Activated CD8-positive, alpha-beta T cell treated with anti-CD3 and anti-CD28 coated beads, Interleukin-2, amount 10 ng/mL, durations not matched to agents 7 days and 5 days (primary cell): ENCODE measurements at regions of chr9 and their contacts with region 1.

Region 1: GRCh38 chr9:6598249-6598725 is 47.2 kb downstream of the GLDC start:
- DNase-seq: no peak
- ATAC-seq: no peak
- H3K4me3 Mint-ChIP-seq: no peak overlapping the region
- H3K27ac Mint-ChIP-seq: no peak overlapping the region
- H3K4me1 Mint-ChIP-seq: no peaks in the 10 kb centered on the region
- H3K27me3 Mint-ChIP-seq: no peaks in the 10 kb centered on the region

Region 2: GRCh38 chr9:6184749-6185645 is 413.3 kb before region 1 on chr9:
- CTCF ChIA-PET with region 1: no interaction called
- POLR2A ChIA-PET with region 1: no interaction called
- DNase-seq: no peak
- ATAC-seq: no peak
- H3K4me3 Mint-ChIP-seq: no peak overlapping the region
- H3K27ac Mint-ChIP-seq: no peak overlapping the region
- H3K4me1 Mint-ChIP-seq: no peaks in the 10 kb centered on the region
- H3K27me3 Mint-ChIP-seq: no peaks in the 10 kb centered on the region

Region 3: GRCh38 chr9:6584881-6585597 is 13.2 kb before region 1 on chr9:
- CTCF ChIA-PET with region 1: interaction called, 10 read pairs
- POLR2A ChIA-PET with region 1: no interaction called
- DNase-seq: no peak
- ATAC-seq: peak; percentile 64
- H3K4me3 Mint-ChIP-seq: no peak overlapping the region
- H3K27ac Mint-ChIP-seq: no peak overlapping the region
- H3K4me1 Mint-ChIP-seq: no peaks in the 10 kb centered on the region
- H3K27me3 Mint-ChIP-seq: peaks cover 2% of the 10 kb centered on the region